Activated CD8-positive, alpha-beta T cell treated with anti-CD3 and anti-CD28 coated beads for 36 hours (primary cell): ENCODE measurements at regions of chr19 and their contacts with region 1.

Region 1: DNA sequence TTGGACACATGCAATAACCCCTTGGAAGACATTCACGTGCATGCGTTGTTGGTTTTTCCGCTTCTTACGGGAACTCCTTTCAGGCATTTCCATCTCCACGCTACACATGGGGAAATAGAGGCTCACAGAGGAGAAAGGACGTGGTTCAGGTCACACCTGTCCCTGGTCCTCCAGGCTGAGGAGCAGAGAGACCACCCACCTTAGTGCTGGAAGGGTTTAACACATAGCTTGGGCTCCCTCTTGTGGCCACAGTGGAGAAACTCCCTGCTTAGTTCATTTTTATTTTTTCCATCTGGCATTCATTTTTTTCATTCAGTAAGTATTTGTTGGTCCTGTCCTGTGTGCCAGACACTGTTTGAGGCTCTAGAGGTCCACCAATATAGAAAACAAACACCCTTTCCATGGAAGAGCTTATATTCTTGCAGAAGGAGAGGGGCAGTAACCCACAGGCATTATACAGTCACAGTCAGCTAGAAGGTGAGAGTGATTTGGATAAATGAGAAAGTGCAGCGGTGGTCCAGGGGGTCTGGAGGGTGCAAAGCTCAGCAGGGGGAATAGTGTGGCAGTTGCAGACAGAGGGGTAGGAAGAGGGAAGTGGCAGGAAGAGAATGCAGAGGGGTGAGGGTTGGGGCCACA is 24.2 kb upstream of the TTYH1 start:
- DNase-seq: peak; percentile 73
- ATAC-seq: peak; percentile 38
- H3K4me3 Mint-ChIP-seq: no peak overlapping the region
- H3K27ac Mint-ChIP-seq: no peak overlapping the region
- H3K4me1 Mint-ChIP-seq: peaks cover 33% of the 10 kb centered on the region
- H3K27me3 Mint-ChIP-seq: peaks cover 3% of the 10 kb centered on the region
- CTCF ChIP-seq: peak; percentile 97

Region 2: DNA sequence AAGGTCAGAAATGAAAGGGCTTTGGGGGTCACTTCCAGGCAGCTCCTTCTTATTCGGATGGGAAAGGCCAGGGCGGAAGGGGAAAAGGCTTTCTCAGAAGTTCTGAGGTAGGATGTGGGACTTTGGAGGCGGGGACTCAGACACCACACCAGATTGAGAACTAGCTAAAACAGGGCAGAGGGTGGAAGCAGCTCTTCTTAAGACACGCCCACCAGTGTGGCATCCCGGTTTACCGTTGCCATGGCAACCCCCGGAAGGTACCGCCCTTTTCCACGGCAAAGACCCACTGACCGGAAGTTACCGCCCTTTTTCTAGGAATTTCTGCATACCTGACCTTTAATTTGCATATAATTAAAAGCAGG is 74.3 kb before region 1 on chr19:
- CTCF ChIA-PET with region 1: interaction called, 147 read pairs
- POLR2A ChIA-PET with region 1: interaction called, 3 read pairs
- intact Hi-C with region 1: no loop called
- DNase-seq: peak; percentile 16
- ATAC-seq: no peak
- H3K4me3 Mint-ChIP-seq: no peak overlapping the region
- H3K27ac Mint-ChIP-seq: no peak overlapping the region
- H3K4me1 Mint-ChIP-seq: no peaks in the 10 kb centered on the region
- H3K27me3 Mint-ChIP-seq: peaks cover 23% of the 10 kb centered on the region
- CTCF ChIP-seq: no peak

Region 3: GRCh38 chr19:54352041-54352440 is 39.0 kb before region 1 on chr19:
- CTCF ChIA-PET with region 1: interaction called, 57 read pairs
- POLR2A ChIA-PET with region 1: interaction called, 4 read pairs
- intact Hi-C with region 1: no loop called
- DNase-seq: no peak
- ATAC-seq: peak; percentile 13
- H3K4me3 Mint-ChIP-seq: no peak overlapping the region
- H3K27ac Mint-ChIP-seq: no peak overlapping the region
- H3K4me1 Mint-ChIP-seq: peaks cover 4% of the 10 kb centered on the region
- H3K27me3 Mint-ChIP-seq: no peaks in the 10 kb centered on the region
- CTCF ChIP-seq: no peak

Region 4: GRCh38 chr19:54379187-54379678 is 11.8 kb before region 1 on chr19:
- CTCF ChIA-PET with region 1: interaction called, 14 read pairs
- POLR2A ChIA-PET with region 1: interaction called, 13 read pairs
- intact Hi-C with region 1: no loop called
- DNase-seq: no peak
- ATAC-seq: no peak
- H3K4me3 Mint-ChIP-seq: no peak overlapping the region
- H3K27ac Mint-ChIP-seq: no peak overlapping the region
- H3K4me1 Mint-ChIP-seq: peaks cover 50% of the 10 kb centered on the region
- H3K27me3 Mint-ChIP-seq: peaks cover 6% of the 10 kb centered on the region
- CTCF ChIP-seq: no peak

Region 5: DNA sequence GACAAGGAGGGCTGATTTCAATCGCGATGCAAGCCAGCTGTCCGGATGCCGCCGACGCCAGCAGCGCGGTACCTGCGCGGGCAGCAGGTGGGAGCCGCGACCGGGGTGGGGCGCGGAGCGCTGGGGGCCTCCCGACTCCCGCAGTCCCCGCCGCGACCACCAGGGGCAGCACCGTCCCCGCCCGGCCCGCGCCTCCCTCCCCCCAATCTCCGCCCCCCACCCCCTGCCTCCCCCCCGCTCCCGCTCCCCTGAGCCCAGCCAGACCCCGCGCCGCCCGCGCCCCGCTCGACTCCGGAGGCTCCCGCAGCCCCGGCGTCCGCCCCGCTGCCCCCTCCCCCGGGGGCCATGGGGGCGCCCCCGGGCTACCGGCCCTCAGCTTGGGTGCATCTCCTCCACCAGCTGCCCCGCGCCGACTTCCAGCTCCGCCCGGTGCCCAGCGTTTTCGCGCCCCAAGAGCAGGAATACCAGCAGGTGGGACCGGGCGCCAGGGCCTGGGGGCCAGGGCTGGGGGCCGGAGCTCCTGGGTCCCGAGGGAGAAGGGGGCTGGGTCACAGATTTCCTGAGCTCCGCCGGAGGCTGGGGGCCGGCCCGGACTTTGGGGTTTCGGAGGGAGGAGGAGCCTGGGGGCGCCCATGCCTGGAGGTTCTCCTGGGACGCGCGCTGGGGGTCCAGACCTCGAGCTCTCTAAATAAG is 24.3 kb after region 1 on chr19 and contains the start of gene TTYH1:
- CTCF ChIA-PET with region 1: interaction called, 10 read pairs
- POLR2A ChIA-PET with region 1: interaction called, 3 read pairs
- intact Hi-C with region 1: no loop called
- DNase-seq: peak; percentile 58
- ATAC-seq: peak; percentile 79
- H3K4me3 Mint-ChIP-seq: no peak within 1 kb of the TSS
- H3K27ac Mint-ChIP-seq: no peak within 1 kb of the TSS
- H3K4me1 Mint-ChIP-seq: peaks cover 15% of the 10 kb centered on the region
- H3K27me3 Mint-ChIP-seq: peaks cover 39% of the 10 kb centered on the region
- CTCF ChIP-seq: peak; percentile 68
- total RNA-seq, gene TTYH1: 0.70 TPM in 1 of 2 experiments, not detected in the other